GM12878 (cell line): ENCODE measurements at regions of chr2 and their contacts with region 1.

Region 1: DNA sequence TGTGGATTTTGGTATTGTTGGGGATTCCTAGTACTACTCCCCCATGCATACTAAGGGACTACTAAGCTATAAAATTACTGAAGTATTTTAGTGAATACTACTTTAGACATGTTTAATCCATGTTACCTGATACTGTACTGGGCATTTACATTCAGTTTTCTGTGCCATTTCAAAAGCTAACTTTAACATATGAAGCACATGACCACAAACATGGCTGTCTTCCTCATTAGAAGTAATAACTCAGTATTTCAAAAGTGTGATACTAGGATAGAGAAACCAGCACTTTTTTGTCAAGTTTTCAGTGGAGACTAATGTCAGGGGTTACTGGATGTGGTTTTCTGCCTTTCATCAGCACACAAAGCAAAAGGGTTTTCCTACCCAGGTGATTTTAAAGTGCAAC is 27.9 kb downstream of the WDR33 start:
- DNase-seq: no peak
- ATAC-seq: no peak; the same call in 2 of the 3 replicates
- H3K4me3 ChIP-seq: no peak overlapping the region
- H3K27ac ChIP-seq: no peak overlapping the region
- H3K4me1 ChIP-seq: no peaks in the 10 kb centered on the region
- H3K27me3 ChIP-seq: no peaks in the 10 kb centered on the region
- CTCF ChIP-seq: no peak
- EP300 ChIP-seq: no peak
- POLR2A ChIP-seq: no peak
- RAD21 ChIP-seq: no peak

Region 2: GRCh38 chr2:127664065-127664894 is 118.8 kb before region 1 on chr2:
- CTCF ChIA-PET with region 1: no interaction called
- POLR2A ChIA-PET with region 1: no interaction called
- RAD21 ChIA-PET with region 1: no interaction called
- SMC1A ChIA-PET with region 1: no interaction called
- in situ Hi-C with region 1: no loop called
- intact Hi-C with region 1: no loop called
- DNase-seq: no peak
- ATAC-seq: no peak
- H3K4me3 ChIP-seq: no peak overlapping the region
- H3K27ac ChIP-seq: no peak overlapping the region
- H3K4me1 ChIP-seq: no peaks in the 10 kb centered on the region
- H3K27me3 ChIP-seq: peaks cover 7 to 8% of the 10 kb centered on the region in 2 experiments
- CTCF ChIP-seq: no peak
- EP300 ChIP-seq: no peak
- POLR2A ChIP-seq: no peak
- RAD21 ChIP-seq: no peak

Region 3: DNA sequence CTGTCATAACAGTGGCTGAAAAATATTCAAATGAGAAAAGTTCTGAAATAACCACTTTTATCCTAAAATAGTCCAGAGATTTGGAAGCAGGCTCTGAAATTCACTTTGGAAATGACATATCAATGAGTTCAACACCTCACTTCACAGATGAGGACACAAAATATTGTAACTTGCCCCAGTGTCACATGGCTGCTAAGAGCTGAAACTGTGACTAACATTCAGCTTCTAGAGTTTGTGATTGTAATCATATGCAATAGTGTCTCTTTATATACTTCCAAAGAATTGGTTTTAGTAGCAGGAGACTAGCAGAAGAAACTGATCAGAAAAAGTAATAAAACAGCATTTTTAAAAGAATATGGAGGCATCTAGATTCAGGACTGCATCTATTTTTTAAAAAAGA is 29.7 kb before region 1 on chr2:
- CTCF ChIA-PET with region 1: no interaction called
- POLR2A ChIA-PET with region 1: interaction called, 12 read pairs
- RAD21 ChIA-PET with region 1: no interaction called
- SMC1A ChIA-PET with region 1: interaction called, 5 read pairs
- in situ Hi-C with region 1: no loop called
- intact Hi-C with region 1: no loop called
- DNase-seq: no peak
- ATAC-seq: no peak
- H3K4me3 ChIP-seq: no peak overlapping the region
- H3K27ac ChIP-seq: no peak overlapping the region
- H3K4me1 ChIP-seq: peaks cover 13% of the 10 kb centered on the region
- H3K27me3 ChIP-seq: no peaks in the 10 kb centered on the region
- CTCF ChIP-seq: no peak
- EP300 ChIP-seq: no peak
- POLR2A ChIP-seq: no peak
- RAD21 ChIP-seq: no peak

Region 4: GRCh38 chr2:127796389-127796788 is 13.3 kb after region 1 on chr2:
- CTCF ChIA-PET with region 1: interaction called, 7 read pairs
- POLR2A ChIA-PET with region 1: interaction called, 15 read pairs
- RAD21 ChIA-PET with region 1: interaction called, 4 read pairs
- SMC1A ChIA-PET with region 1: interaction called, 3 read pairs
- in situ Hi-C with region 1: no loop called
- intact Hi-C with region 1: no loop called
- DNase-seq: peak; percentile 17
- ATAC-seq: peak; percentile 66
- H3K4me3 ChIP-seq: no peak overlapping the region; the same call in 1 of the 2 replicates
- H3K27ac ChIP-seq: peak overlapping the region; percentile 37; the same call in 1 of the 2 replicates
- H3K4me1 ChIP-seq: peaks cover 29% of the 10 kb centered on the region
- H3K27me3 ChIP-seq: no peaks in the 10 kb centered on the region
- CTCF ChIP-seq: no peak
- EP300 ChIP-seq: peak in 1 of 2 experiments; percentile 36; a peak in 1 of 4 replicates
- POLR2A ChIP-seq: no peak
- RAD21 ChIP-seq: no peak

Region 5: DNA sequence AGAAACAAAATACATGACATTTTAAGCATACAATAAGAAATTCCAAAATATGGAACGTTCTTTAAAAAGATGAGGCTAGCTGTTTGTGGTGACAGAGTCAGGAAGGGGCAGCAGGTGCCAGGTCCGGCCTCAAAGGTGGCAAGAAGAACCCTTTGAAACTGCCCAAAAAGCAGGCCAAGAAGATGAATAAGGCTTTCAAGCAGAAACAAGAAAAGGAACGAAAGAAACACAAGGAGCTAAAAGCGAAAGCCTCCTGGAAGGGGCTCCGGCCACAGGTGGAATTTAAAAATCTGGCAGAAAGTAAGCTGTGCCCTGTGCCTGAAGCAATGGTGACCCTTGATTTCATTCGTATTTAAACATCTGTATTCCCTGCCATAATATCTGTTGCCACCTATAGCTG is 22.4 kb after region 1 on chr2:
- CTCF ChIA-PET with region 1: interaction called, 4 read pairs
- POLR2A ChIA-PET with region 1: interaction called, 4 read pairs
- RAD21 ChIA-PET with region 1: interaction called, 3 read pairs
- SMC1A ChIA-PET with region 1: interaction called, 10 read pairs
- in situ Hi-C with region 1: no loop called
- intact Hi-C with region 1: no loop called
- DNase-seq: no peak
- ATAC-seq: no peak
- H3K4me3 ChIP-seq: no peak overlapping the region; the same call in 1 of the 2 replicates
- H3K27ac ChIP-seq: no peak overlapping the region
- H3K4me1 ChIP-seq: peaks cover 7% of the 10 kb centered on the region
- H3K27me3 ChIP-seq: no peaks in the 10 kb centered on the region
- CTCF ChIP-seq: no peak
- EP300 ChIP-seq: no peak
- POLR2A ChIP-seq: no peak
- RAD21 ChIP-seq: no peak